ENCODE measurements at regions of chr1 and their contacts with region 1.

Region 1: DNA sequence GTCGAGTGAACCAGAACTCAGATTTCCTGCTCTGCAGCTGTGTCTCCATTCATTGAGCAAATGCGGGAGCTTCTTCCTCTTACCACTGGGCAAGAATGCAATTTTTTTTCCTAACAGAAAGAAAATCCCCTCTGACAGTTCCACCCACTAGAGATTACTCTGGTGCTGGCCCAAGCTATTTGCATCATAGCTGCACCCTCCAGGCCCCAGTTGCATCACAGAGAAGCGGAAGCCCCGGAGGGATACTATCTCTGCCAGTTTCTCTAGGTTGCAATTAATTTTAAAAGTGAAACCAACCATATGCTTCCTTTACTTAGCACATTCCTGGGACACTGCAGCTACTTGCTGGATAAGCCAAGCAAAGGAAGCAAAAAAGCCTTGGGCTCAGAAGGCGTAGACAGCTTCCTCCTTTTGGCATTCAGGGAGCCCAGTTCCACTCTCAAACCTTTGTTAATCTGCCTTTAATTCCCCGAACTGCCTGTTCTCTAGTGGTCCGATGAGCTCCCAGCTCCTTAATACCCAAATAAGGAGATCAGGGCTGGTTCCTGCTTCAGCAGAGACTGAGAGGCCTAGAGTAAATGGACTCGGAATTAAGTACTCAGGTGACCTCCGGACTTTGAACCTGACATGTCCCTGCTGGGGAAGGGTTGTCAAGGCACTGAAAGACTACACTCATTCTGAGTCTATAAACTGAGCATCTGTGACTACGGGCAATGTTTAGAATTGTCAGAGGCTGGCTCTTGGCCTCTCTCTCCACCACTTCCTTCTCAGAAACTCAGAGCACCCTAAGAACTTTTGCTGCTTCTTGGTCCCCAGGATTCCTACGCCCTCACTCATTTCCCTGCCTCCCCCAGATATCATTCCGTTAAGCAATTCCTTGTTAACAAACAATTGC is 72.5 kb upstream of the TNFSF18 start:
- DNase-seq: peak; percentile 98
- H3K4me3 Mint-ChIP-seq: peak overlapping the region; percentile 72
- H3K27ac Mint-ChIP-seq: peak overlapping the region; percentile 98
- H3K4me1 Mint-ChIP-seq: peaks cover 24% of the 10 kb centered on the region
- H3K27me3 Mint-ChIP-seq: no peaks in the 10 kb centered on the region
- CTCF ChIP-seq: no peak

Region 2: DNA sequence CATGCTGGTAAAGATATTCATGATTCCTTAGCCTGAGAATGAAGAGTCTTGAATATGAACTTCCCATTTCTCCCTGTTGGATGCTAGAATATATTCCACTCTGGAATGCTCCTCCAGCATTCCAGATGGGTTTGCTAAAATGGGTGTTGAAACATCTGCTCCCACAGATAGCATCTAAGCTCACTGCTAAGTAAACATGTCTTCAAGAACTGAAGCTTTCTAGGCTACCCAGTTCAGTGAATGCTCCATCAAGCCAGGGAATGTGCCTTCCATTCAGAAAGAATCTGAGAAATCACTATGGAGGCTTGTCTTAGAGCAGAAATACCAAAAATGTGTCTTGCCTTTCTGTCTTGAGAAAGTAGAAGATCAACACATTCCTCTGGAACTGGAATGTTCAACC is 153.6 kb before region 1 on chr1:
- CTCF ChIA-PET with region 1: no interaction called
- POLR2A ChIA-PET with region 1: interaction called, 8 read pairs
- intact Hi-C with region 1: loop called (anchors 5 kb)
- DNase-seq: peak; percentile 30
- H3K4me3 Mint-ChIP-seq: no peak overlapping the region
- H3K27ac Mint-ChIP-seq: no peak overlapping the region
- H3K4me1 Mint-ChIP-seq: peaks cover 47% of the 10 kb centered on the region
- H3K27me3 Mint-ChIP-seq: no peaks in the 10 kb centered on the region
- CTCF ChIP-seq: no peak

Region 3: GRCh38 chr1:173190101-173190906 is 67.1 kb after region 1 on chr1:
- CTCF ChIA-PET with region 1: interaction called, 6 read pairs
- POLR2A ChIA-PET with region 1: interaction called, 23 read pairs
- intact Hi-C with region 1: no loop called
- DNase-seq: peak; percentile 100
- H3K4me3 Mint-ChIP-seq: peak overlapping the region; percentile 44
- H3K27ac Mint-ChIP-seq: peak overlapping the region; percentile 93
- H3K4me1 Mint-ChIP-seq: peaks cover 29% of the 10 kb centered on the region
- H3K27me3 Mint-ChIP-seq: no peaks in the 10 kb centered on the region
- CTCF ChIP-seq: no peak

Region 4: DNA sequence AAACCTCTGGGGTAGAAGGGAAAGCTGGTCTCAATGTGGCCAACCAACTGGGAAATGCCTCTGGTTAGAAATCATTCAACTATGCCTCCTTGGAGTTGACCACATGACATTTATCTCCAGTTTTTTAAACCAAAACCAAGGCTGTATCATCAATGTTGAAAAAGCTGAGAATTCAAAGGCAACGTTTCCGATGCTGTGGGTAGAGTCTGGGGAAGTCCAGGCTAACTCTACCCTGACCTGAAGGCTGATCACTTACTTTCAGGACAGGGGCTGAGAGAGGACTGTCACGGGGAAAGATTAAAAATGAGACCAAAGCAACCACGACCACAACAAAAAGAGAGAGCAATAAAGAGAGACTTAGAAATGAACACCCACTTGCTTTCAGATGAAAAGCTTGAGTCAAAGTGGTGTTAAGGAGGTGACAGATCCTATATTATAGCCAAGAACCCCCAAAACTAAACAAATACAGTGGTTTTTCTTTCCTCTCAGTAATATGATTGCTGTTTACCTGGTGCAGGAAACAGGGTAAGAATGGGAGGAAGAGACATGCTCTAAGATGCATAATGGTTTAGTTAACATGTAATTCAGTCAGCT is 174.7 kb after region 1 on chr1:
- CTCF ChIA-PET with region 1: no interaction called
- POLR2A ChIA-PET with region 1: no interaction called
- intact Hi-C with region 1: no loop called
- DNase-seq: no peak
- H3K4me3 Mint-ChIP-seq: no peak overlapping the region
- H3K27ac Mint-ChIP-seq: no peak overlapping the region
- H3K4me1 Mint-ChIP-seq: peaks cover 17% of the 10 kb centered on the region
- H3K27me3 Mint-ChIP-seq: no peaks in the 10 kb centered on the region
- CTCF ChIP-seq: no peak

Measured in MCF 10A (cell line).